PC-9 (cell line): ENCODE measurements at regions of chr6 and their contacts with region 1.

Region 1: GRCh38 chr6:142946181-142946923 is 1.4 kb upstream of the HIVEP2 start:
- DNase-seq: peak; percentile 91 to 96
- H3K4me3 ChIP-seq: peak overlapping the region; percentile 89
- H3K27ac ChIP-seq: peak overlapping the region; percentile 90
- H3K4me1 ChIP-seq: peaks cover 36% of the 10 kb centered on the region
- H3K27me3 ChIP-seq: no peaks in the 10 kb centered on the region
- CTCF ChIP-seq: no peak

Region 2: DNA sequence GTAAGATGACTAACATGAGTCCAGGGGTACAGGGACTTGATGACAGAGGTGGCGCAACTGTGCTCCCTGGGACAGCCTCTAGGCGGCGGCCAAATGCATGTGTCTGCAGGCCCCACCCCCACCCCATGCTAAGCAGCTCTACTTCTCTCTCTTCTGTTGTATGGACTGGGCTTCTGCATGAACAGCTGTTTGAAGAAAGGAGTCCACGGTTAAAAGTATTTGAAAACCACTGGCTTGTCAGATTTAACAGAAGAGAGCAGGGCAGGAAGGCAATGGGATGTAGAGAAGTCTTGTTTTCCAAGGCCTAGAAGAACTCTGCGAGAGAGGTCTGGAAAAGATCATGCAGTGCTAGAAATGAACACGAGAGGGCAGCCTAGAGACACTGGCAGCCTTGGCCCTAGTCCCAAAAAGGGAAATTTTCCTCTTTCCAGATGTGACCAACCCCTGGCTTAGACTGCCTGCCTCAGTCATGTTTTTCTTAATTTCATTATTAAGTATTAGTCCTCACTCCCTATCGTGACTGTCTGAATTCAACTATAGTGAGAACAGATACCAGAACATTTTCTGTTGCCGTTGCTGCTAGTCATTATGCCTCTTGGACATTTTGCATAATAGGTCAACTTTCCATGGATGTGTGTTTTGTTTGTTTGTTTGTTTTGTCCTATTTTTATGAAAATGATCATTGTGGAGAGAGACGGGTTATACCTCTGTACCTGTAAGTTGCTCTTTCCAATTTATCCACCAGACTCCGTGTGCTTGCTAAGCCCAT is 379.5 kb before region 1 on chr6:
- CTCF ChIA-PET with region 1: no interaction called
- POLR2A ChIA-PET with region 1: no interaction called
- intact Hi-C with region 1: loop called (anchors 5 kb)
- DNase-seq: peak; percentile 44 to 56
- H3K4me3 ChIP-seq: no peak overlapping the region
- H3K27ac ChIP-seq: no peak overlapping the region
- H3K4me1 ChIP-seq: peaks cover 20% of the 10 kb centered on the region
- H3K27me3 ChIP-seq: no peaks in the 10 kb centered on the region
- CTCF ChIP-seq: peak; percentile 90

Region 3: GRCh38 chr6:142756215-142756634 is 190.1 kb before region 1 on chr6:
- CTCF ChIA-PET with region 1: no interaction called
- POLR2A ChIA-PET with region 1: no interaction called
- intact Hi-C with region 1: loop called (anchors 1 kb)
- DNase-seq: peak; percentile 86 to 97
- H3K4me3 ChIP-seq: no peak overlapping the region
- H3K27ac ChIP-seq: peak overlapping the region; percentile 54
- H3K4me1 ChIP-seq: peaks cover 22% of the 10 kb centered on the region
- H3K27me3 ChIP-seq: no peaks in the 10 kb centered on the region
- CTCF ChIP-seq: 0 out of 2 replicates have a peak, but pooled peaks have one; percentile 22

Region 4: GRCh38 chr6:142902636-142903053 is 43.7 kb before region 1 on chr6:
- CTCF ChIA-PET with region 1: no interaction called
- POLR2A ChIA-PET with region 1: no interaction called
- intact Hi-C with region 1: loop called (anchors 1 kb)
- DNase-seq: peak; percentile 81 to 91
- H3K4me3 ChIP-seq: peak overlapping the region; percentile 40; the same call in 1 of the 2 replicates
- H3K27ac ChIP-seq: peak overlapping the region; percentile 82
- H3K4me1 ChIP-seq: peaks cover 38% of the 10 kb centered on the region
- H3K27me3 ChIP-seq: no peaks in the 10 kb centered on the region
- CTCF ChIP-seq: no peak

Region 5: GRCh38 chr6:143337201-143337949 is 391.0 kb after region 1 on chr6:
- CTCF ChIA-PET with region 1: no interaction called
- POLR2A ChIA-PET with region 1: no interaction called
- intact Hi-C with region 1: loop called (anchors 5 kb)
- DNase-seq: peak in 1 of 2 experiments; percentile 26
- H3K4me3 ChIP-seq: no peak overlapping the region
- H3K27ac ChIP-seq: peak overlapping the region; percentile 87
- H3K4me1 ChIP-seq: peaks cover 29% of the 10 kb centered on the region
- H3K27me3 ChIP-seq: no peaks in the 10 kb centered on the region
- CTCF ChIP-seq: 0 out of 2 replicates have a peak, but pooled peaks have one; percentile 36

Region 6: GRCh38 chr6:143427109-143427817 is 480.9 kb after region 1 on chr6:
- CTCF ChIA-PET with region 1: no interaction called
- POLR2A ChIA-PET with region 1: no interaction called
- intact Hi-C with region 1: loop called (anchors 1 kb)
- DNase-seq: peak; percentile 80 to 86
- H3K4me3 ChIP-seq: no peak overlapping the region
- H3K27ac ChIP-seq: no peak overlapping the region
- H3K4me1 ChIP-seq: peaks cover 7% of the 10 kb centered on the region
- H3K27me3 ChIP-seq: no peaks in the 10 kb centered on the region
- CTCF ChIP-seq: peak; percentile 96

Region 7: DNA sequence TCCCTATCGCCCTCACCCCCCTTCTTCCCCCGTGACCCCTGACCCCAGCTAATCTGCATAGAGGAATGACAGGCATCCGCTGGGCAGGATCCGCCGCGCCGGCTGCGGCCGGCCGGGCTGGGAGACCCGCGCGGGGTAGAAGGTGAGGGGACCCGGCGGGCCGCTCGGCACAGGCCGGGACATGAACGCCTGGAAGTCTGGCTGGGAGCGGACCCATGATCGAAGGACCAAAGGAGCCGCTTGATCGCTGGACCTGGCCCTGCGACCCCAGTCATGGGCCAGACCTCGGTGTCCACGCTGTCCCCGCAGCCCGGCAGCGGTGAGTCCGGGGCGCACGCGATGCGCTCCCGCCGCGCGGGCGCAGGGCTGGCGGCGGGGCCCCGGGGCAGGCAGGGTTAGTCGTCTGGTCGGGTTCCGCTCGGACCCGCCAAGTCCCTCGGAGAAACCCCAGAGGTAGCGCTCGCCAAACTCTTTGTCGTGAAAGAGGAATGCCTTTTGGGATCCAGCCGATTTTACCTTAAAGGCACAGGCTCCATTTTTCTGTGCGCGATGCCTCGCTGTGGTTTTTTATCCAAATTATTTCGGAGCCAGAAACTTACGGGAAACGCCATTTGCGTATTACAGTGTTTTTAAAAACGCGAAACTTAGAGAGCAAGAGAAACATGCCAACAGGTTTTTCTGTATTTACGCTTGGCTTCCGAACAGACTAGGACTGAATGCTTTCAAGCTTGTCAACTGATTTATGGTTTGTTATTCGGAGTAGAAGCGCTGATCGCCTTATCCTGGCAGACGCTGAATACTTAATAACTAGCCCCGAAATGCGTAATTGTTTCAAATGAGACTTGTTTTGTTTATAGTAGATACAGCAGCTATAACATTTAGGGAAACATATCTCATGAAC is 731.8 kb after region 1 on chr6 and contains the start of gene PHACTR2:
- CTCF ChIA-PET with region 1: no interaction called
- POLR2A ChIA-PET with region 1: no interaction called
- intact Hi-C with region 1: loop called (anchors 10 kb)
- DNase-seq: peak; percentile 41 to 64
- H3K4me3 ChIP-seq: peak within 1 kb of the TSS; percentile 95
- H3K27ac ChIP-seq: peak within 1 kb of the TSS; percentile 92
- H3K4me1 ChIP-seq: peaks cover 66% of the 10 kb centered on the region
- H3K27me3 ChIP-seq: no peaks in the 10 kb centered on the region
- CTCF ChIP-seq: no peak
- total RNA-seq, gene PHACTR2: 32.8 and 39.8 TPM in 2 replicates